Ascending aorta (tissue), 2 donors: ENCODE measurements at regions of chrX and their contacts with region 1.

Region 1: GRCh38 chrX:53683556-53684414 is 2.7 kb downstream of the HUWE1 start:
- DNase-seq: peak; percentile 84 to 96
- H3K4me3 ChIP-seq: peak overlapping the region; percentile 56 to 71
- H3K27ac ChIP-seq: peak overlapping the region; percentile 86 to 89
- H3K4me1 ChIP-seq: no peaks in the 10 kb centered on the region
- H3K27me3 ChIP-seq: no peaks in the 10 kb centered on the region
- CTCF ChIP-seq: no peak

Region 2: DNA sequence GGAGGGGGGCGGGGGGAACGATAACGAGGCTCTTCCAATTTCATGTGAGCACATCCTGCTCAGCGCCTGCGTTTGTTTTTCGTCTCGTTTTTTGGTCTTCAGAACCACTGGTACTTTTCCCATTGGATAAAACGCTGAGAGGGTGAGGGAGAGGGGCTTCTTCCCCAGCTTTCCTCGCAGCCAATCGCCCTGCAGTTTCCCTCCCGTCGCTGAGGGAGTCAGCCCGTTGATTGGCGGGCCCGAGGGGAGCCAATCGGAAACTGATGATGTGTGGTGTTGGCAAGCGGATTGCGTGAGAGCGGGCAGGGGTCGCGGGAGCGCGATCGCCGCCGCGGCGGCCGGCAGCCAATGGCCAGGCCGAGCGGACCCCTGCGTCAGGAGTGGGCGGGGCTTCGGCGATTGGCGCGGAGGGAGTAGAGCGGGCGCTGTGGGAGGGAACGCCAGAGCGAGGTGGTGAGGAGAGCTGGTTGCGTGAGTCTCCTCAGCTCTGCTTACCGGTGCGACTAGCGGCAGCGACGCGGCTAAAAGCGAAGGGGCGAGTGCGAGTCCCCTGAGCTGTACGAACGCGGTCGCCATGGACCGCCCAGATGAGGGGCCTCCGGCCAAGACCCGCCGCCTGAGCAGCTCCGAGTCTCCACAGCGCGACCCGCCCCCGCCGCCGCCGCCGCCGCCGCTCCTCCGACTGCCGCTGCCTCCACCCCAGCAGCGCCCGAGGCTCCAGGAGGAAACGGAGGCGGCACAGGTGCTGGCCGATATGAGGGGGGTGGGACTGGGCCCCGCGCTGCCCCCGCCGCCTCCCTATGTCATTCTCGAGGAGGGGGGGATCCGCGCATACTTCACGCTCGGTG is 601.6 kb before region 1 on chrX and contains the start of gene TSPYL2:
- intact Hi-C with region 1: loop called (anchors 10 kb)
- DNase-seq: peak; percentile 89 to 96
- H3K4me3 ChIP-seq: peak within 1 kb of the TSS; percentile 74 to 97
- H3K27ac ChIP-seq: peak within 1 kb of the TSS; percentile 96
- H3K4me1 ChIP-seq: peaks cover 0 to 2% of the 10 kb centered on the region in 2 donors
- H3K27me3 ChIP-seq: no peaks in the 10 kb centered on the region
- CTCF ChIP-seq: peak in 1 of 3 experiments; percentile 5
- total RNA-seq, gene TSPYL2: 42.3 TPM

Region 3: DNA sequence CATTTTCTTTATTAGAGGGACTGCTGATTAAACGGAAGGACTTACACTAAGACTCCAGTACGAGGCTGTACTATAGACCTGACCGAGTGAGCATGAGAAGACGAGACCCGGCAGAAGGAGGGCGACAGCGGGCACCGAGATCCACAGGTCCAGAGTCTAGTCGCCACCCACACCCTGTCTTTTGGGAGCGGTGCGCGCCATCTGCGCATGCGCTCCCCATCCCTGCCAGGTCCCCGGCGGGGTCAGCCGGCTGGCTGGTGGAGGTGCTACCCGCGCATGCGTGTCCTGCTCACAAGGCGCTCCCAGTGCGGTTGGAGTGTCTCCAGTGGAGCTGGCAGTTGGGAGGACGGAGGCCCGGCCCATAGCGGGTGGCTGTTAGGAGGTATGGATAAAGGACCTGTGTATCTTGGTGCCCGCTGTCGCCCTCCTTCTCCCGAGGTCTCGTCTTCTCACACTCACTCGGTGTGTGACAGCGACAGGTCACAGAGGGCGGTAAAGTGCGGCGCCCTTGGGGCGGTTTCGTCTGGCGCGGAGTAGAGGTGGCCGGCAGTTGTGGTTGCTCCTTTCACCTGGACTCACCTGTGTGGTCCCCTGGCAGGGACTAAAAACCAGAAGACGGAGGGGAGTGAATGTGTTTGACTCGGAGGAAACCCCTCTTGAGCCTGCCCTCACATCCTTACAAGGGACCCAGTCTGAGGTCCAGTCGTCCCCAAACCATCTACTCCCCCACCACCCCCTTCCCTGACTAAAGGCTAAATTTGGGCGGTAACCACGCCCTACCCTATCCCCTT is 242.1 kb before region 1 on chrX:
- intact Hi-C with region 1: loop called (anchors 5 kb)
- DNase-seq: peak; percentile 23 to 88
- H3K4me3 ChIP-seq: peak overlapping the region; percentile 44 to 56
- H3K27ac ChIP-seq: peak overlapping the region in 1 of 2 donors; percentile 0
- H3K4me1 ChIP-seq: peaks cover 0 to 4% of the 10 kb centered on the region in 2 donors
- H3K27me3 ChIP-seq: no peaks in the 10 kb centered on the region
- CTCF ChIP-seq: no peak

Region 4: GRCh38 chrX:54044126-54044876 is 360.5 kb after region 1 on chrX and contains the start of gene PHF8:
- intact Hi-C with region 1: loop called (anchors 2 kb)
- DNase-seq: peak; percentile 78 to 97
- H3K4me3 ChIP-seq: peak within 1 kb of the TSS; percentile 64 to 73
- H3K27ac ChIP-seq: peak within 1 kb of the TSS; percentile 85 to 96
- H3K4me1 ChIP-seq: no peaks in the 10 kb centered on the region
- H3K27me3 ChIP-seq: no peaks in the 10 kb centered on the region
- CTCF ChIP-seq: no peak
- total RNA-seq, gene PHF8: 41.6 TPM

Region 5: GRCh38 chrX:54439967-54440871 is 756.4 kb after region 1 on chrX and contains the start of gene TSR2:
- intact Hi-C with region 1: loop called (anchors 10 kb)
- DNase-seq: peak; percentile 63 to 88
- H3K4me3 ChIP-seq: peak within 1 kb of the TSS; percentile 54 to 89
- H3K27ac ChIP-seq: peak within 1 kb of the TSS; percentile 38 to 56
- H3K4me1 ChIP-seq: peaks cover 0 to 6% of the 10 kb centered on the region in 2 donors
- H3K27me3 ChIP-seq: no peaks in the 10 kb centered on the region
- CTCF ChIP-seq: peak in 1 of 3 experiments; percentile 26
- total RNA-seq, gene TSR2: 14.0 TPM